Mammary epithelial cell (primary cell): ENCODE measurements at regions of chr1 and their contacts with region 1.

Region 1: DNA sequence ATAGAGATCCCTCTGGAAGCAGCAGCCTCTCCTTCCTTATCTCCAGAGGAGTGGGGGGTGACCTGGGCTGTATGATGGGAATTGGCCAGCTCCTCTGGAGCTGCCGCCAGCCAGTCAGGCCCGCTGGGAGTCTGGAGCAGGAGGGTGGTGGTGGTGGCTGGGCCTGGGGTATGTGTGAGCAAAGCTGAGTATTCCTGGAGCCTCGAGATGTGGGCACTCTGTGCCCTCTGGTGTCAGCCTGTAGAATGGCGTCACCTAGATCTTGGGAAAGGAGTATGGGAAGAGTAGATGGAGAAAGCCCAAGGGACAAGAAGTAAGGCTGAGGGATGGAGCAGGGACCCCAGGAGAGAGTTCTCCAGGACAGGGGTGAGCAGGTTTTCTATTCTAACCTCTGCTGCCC is 16.0 kb downstream of the VANGL2 start:
- DNase-seq: peak; percentile 56
- H3K4me3 ChIP-seq: no peak overlapping the region
- H3K27ac ChIP-seq: no peak overlapping the region
- H3K4me1 ChIP-seq: peaks cover 15% of the 10 kb centered on the region
- H3K27me3 ChIP-seq: no peaks in the 10 kb centered on the region
- CTCF ChIP-seq: peak; percentile 62 to 84

Region 2: GRCh38 chr1:160291248-160292220 is 124.8 kb before region 1 on chr1:
- CTCF ChIA-PET with region 1: no interaction called
- dilution Hi-C with region 1: no loop called
- in situ Hi-C with region 1: no loop called
- intact Hi-C with region 1: loop called (anchors 2 kb)
- DNase-seq: peak; percentile 51
- H3K4me3 ChIP-seq: no peak overlapping the region
- H3K27ac ChIP-seq: no peak overlapping the region
- H3K4me1 ChIP-seq: no peaks in the 10 kb centered on the region
- H3K27me3 ChIP-seq: no peaks in the 10 kb centered on the region
- CTCF ChIP-seq: peak; percentile 78 to 84

Region 3: GRCh38 chr1:160342953-160343869 is 73.2 kb before region 1 on chr1 and contains the starts of genes COPA and NCSTN:
- CTCF ChIA-PET with region 1: no interaction called
- dilution Hi-C with region 1: no loop called
- in situ Hi-C with region 1: no loop called
- intact Hi-C with region 1: loop called (anchors 2 kb)
- DNase-seq: peak; percentile 92
- H3K4me3 ChIP-seq: peak within 1 kb of the TSS; percentile 89 to 98 (median 95)
- H3K27ac ChIP-seq: peak within 1 kb of the TSS; percentile 90
- H3K4me1 ChIP-seq: peaks cover 9% of the 10 kb centered on the region
- H3K27me3 ChIP-seq: no peaks in the 10 kb centered on the region
- CTCF ChIP-seq: peak in 1 of 2 donors; percentile 41
- total RNA-seq, gene COPA: 155 to 173 TPM
- total RNA-seq, gene NCSTN: 85.0 to 102 TPM

Region 4: GRCh38 chr1:160354388-160354985 is 61.9 kb before region 1 on chr1:
- CTCF ChIA-PET with region 1: interaction called, 4 read pairs
- dilution Hi-C with region 1: no loop called
- in situ Hi-C with region 1: loop called (anchors 5 kb)
- intact Hi-C with region 1: loop called (anchors 1 kb)
- DNase-seq: no peak
- H3K4me3 ChIP-seq: no peak overlapping the region
- H3K27ac ChIP-seq: no peak overlapping the region
- H3K4me1 ChIP-seq: no peaks in the 10 kb centered on the region
- H3K27me3 ChIP-seq: no peaks in the 10 kb centered on the region
- CTCF ChIP-seq: peak; percentile 57 to 63

Region 5: DNA sequence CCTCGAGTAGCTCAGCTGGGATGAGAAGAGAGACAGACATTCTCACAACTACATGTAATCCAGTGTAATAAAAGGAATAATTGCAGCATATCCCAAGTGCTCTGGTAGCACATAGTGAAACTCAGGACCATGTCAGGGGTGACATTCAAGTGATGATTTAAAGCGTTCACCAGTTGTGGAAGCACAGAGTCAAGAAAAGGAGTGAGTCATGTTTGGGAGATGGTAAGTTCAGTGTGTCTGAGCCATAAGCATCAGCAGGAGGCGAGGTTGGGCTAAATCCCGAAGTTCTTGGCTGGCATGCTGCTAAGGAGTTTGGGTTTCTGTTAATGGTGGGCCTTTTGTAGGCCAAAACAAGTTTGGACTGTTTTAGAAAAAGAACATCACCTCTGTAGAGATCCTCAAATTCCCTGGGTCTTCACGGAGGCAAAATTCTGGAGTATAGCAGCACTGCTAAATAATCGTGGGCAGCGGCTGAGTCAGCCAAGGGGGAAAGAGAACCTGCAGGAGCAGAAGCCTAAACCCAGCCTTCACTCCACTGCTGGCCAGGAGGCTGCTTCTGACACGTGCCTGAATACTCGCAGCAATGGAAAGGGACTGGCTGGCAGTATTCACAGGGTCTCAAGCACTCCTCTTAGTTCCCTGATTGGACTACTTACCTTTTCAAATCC is 56.7 kb before region 1 on chr1:
- CTCF ChIA-PET with region 1: no interaction called
- dilution Hi-C with region 1: no loop called
- in situ Hi-C with region 1: loop called (anchors 5 kb)
- intact Hi-C with region 1: loop called (anchors 1 kb)
- DNase-seq: no peak
- H3K4me3 ChIP-seq: no peak overlapping the region
- H3K27ac ChIP-seq: no peak overlapping the region
- H3K4me1 ChIP-seq: no peaks in the 10 kb centered on the region
- H3K27me3 ChIP-seq: no peaks in the 10 kb centered on the region
- CTCF ChIP-seq: peak in 1 of 2 donors; percentile 5

Region 6: DNA sequence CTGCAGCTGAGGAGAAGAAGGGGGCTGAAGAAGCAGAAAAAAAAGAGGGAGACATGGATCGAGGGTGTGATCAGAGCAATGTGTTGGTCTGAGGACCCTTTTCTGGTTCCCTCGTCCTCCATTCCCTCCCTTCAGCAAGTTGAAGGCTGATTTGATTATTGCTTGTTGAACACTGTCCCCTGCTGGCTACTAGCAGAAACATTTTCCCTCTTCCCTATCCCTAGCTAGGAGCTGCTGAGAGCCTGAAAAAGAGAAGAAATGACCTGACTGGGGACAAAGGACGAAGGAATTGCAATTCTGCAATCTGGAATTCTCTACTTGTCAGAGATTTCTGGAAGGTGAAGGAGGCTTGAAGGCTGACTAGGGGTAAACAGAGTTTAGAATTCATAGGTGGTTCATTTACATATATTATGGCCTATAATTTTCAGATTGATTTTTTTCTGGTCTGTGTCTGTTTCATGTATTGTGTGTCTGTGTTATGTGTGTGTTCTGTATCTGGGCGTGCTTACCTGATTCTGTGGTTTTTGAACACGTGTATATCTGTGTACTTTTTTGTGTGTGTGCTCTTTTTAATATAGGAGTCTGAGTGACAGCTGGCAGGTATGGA is 39.7 kb before region 1 on chr1:
- CTCF ChIA-PET with region 1: no interaction called
- dilution Hi-C with region 1: no loop called
- in situ Hi-C with region 1: no loop called
- intact Hi-C with region 1: loop called (anchors 2 kb)
- DNase-seq: peak; percentile 46
- H3K4me3 ChIP-seq: no peak overlapping the region
- H3K27ac ChIP-seq: no peak overlapping the region
- H3K4me1 ChIP-seq: peaks cover 3% of the 10 kb centered on the region
- H3K27me3 ChIP-seq: no peaks in the 10 kb centered on the region
- CTCF ChIP-seq: peak; percentile 96 to 97

Region 7: GRCh38 chr1:160575112-160575664 is 158.8 kb after region 1 on chr1:
- CTCF ChIA-PET with region 1: no interaction called
- dilution Hi-C with region 1: no loop called
- in situ Hi-C with region 1: no loop called
- intact Hi-C with region 1: no loop called
- DNase-seq: no peak
- H3K4me3 ChIP-seq: no peak overlapping the region
- H3K27ac ChIP-seq: no peak overlapping the region
- H3K4me1 ChIP-seq: no peaks in the 10 kb centered on the region
- H3K27me3 ChIP-seq: no peaks in the 10 kb centered on the region
- CTCF ChIP-seq: no peak